ENCODE measurements at regions of chr11 and their contacts with region 1.

Region 1: GRCh38 chr11:19561011-19561410 is 151.6 kb upstream of the NAV2 start:
- DNase-seq: no peak
- ATAC-seq: no peak
- H3K4me3 Mint-ChIP-seq: no peak overlapping the region
- H3K27ac Mint-ChIP-seq: no peak overlapping the region
- H3K4me1 Mint-ChIP-seq: no peaks in the 10 kb centered on the region
- H3K27me3 Mint-ChIP-seq: peaks cover 5% of the 10 kb centered on the region

Region 2: DNA sequence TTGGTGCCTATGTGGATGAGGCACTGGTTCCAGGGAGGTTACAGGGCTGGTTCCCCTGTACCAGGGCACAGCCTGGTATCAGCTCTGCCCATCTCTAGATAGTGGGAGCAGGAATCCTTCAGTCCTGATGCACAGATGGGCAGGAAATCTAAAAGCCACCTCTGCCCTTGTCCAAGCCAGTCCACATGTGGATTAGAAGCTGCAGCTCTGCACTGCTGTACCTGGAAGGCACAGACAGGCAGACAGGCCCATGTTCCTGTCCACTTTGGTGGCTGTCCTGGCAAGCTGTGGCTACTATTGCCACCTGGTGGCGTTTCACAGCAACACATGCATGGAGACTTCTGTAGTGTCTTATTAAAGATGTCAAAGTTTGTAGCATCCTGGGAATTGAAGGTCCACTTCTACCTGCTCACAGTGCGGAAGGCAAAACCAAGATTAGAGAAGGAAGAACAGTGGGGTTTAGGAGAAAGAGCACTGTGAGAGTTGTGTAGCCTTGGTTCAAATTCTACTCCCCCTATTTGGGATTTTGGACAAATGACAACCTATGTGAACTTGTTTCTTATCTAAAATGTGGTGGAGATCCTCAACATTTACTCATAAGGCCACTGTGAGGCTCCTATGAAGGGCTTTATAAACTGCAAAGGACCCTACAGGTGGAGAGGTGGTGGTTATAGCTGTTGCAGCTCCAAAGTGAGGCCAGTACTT is 181.7 kb after region 1 on chr11:
- CTCF ChIA-PET with region 1: interaction called, 37 read pairs
- POLR2A ChIA-PET with region 1: interaction called, 3 read pairs
- DNase-seq: peak; percentile 73
- ATAC-seq: peak; percentile 71
- H3K4me3 Mint-ChIP-seq: no peak overlapping the region
- H3K27ac Mint-ChIP-seq: no peak overlapping the region
- H3K4me1 Mint-ChIP-seq: no peaks in the 10 kb centered on the region
- H3K27me3 Mint-ChIP-seq: peaks cover 6% of the 10 kb centered on the region